ENCODE measurements at regions of chr7 and their contacts with region 1.

Region 1: DNA sequence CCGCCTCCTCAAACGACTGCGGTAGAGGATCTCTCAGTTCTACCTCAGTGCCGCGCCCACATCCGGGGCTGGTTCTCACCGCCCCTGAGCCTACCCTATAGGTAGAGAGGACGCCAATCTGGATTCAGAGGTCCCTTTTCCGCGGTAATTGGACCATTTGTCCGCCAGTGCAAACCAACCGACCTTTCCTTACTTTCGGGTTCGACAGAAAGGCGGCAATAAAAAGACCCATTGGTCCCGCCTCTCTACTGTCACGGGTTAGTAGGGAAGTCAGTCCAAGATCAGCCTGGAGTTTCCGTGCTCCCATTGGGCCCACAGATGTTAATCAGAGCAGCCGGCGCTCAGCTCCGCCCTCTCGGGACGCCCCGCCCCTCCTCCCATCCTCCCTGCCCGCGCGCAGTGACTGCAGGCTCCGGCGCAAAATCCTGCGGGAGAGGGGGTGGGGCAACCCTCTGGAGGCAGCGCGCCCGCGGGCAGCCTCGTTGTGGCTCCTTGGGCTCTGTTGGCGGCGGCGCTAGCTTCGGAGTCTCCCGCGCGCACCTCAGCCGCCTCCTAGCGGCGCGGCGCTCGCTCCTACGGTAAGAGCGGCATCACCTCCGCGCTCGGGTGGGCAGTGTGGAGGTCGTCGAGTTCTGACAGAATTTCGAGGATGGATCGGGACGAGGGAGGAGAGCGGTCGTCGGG is at the starts of genes PHTF2 and TMEM60:
- DNase-seq: peak; percentile 93 to 99 (median 96)
- H3K4me3 ChIP-seq: peak within 1 kb of the TSS; percentile 82 to 96
- H3K4me3 Mint-ChIP-seq: peak within 1 kb of the TSS; percentile 93 to 100 (median 96)
- H3K27ac ChIP-seq: peak within 1 kb of the TSS; percentile 80
- H3K27ac Mint-ChIP-seq: peak within 1 kb of the TSS; percentile 91 to 99 (median 95)
- H3K4me1 ChIP-seq: peaks cover 69% of the 10 kb centered on the region
- H3K4me1 Mint-ChIP-seq: peaks cover 53 to 83% (median 75%) of the 10 kb centered on the region in 4 donors
- H3K27me3 ChIP-seq: no peaks in the 10 kb centered on the region
- H3K27me3 Mint-ChIP-seq: no peaks in the 10 kb centered on the region
- total RNA-seq, gene PHTF2: 32.8 to 34.1 TPM
- total RNA-seq, gene TMEM60: 18.2 to 18.3 TPM

Region 2: GRCh38 chr7:77536413-77537135 is 262.0 kb before region 1 on chr7:
- CTCF ChIA-PET with region 1: no interaction called
- POLR2A ChIA-PET with region 1: no interaction called
- intact Hi-C with region 1: loop called (anchors 1 kb)
- DNase-seq: peak; percentile 93 to 96 (median 94)
- H3K4me3 ChIP-seq: peak overlapping the region; percentile 76 to 95
- H3K4me3 Mint-ChIP-seq: peak overlapping the region; percentile 93 to 98 (median 98)
- H3K27ac ChIP-seq: peak overlapping the region; percentile 77
- H3K27ac Mint-ChIP-seq: peak overlapping the region; percentile 94 to 98 (median 96)
- H3K4me1 ChIP-seq: peaks cover 7% of the 10 kb centered on the region
- H3K4me1 Mint-ChIP-seq: peaks cover 6 to 28% (median 16%) of the 10 kb centered on the region in 4 donors
- H3K27me3 ChIP-seq: no peaks in the 10 kb centered on the region
- H3K27me3 Mint-ChIP-seq: no peaks in the 10 kb centered on the region

Region 3: DNA sequence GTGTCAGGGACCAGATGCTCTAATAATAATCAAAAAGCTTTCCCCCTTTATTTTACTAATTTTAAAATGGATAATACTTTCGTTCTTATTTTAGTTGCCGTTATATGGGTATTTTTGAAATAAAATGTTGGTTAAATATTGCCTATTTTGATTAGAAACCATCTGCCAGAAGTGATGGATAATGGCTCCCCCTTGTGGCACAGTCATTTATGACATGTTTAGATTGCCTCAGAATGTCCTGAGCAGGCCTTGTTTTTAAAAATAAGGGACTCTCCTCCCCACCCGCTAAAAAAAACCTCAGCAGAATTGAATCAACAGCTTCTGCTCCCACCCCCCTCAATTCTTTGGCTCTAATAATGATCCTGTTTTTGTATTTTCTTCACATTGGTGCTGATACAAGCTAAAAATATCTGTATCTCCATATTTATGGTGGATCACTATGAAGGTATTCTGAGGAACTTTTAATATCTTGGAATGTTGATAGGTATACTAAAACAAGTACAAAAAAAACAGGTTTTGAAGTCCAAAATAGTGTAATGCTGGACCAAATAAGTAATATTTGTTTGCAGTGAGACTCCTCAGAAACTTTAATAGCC is 39.1 kb before region 1 on chr7:
- CTCF ChIA-PET with region 1: interaction called, 3 read pairs
- POLR2A ChIA-PET with region 1: interaction called, 3 read pairs
- intact Hi-C with region 1: loop called (anchors 2 kb)
- DNase-seq: peak; percentile 68 to 79 (median 73)
- H3K4me3 ChIP-seq: no peak overlapping the region
- H3K4me3 Mint-ChIP-seq: peak overlapping the region in 1 of 8 donors; percentile 28
- H3K27ac ChIP-seq: no peak overlapping the region
- H3K27ac Mint-ChIP-seq: peak overlapping the region in 6 of 7 donors; percentile 9 to 61 (median 36)
- H3K4me1 ChIP-seq: peaks cover 33% of the 10 kb centered on the region
- H3K4me1 Mint-ChIP-seq: peaks cover 29 to 51% (median 36%) of the 10 kb centered on the region in 4 donors
- H3K27me3 ChIP-seq: no peaks in the 10 kb centered on the region
- H3K27me3 Mint-ChIP-seq: no peaks in the 10 kb centered on the region

Region 4: GRCh38 chr7:77830649-77831355 is 32.3 kb after region 1 on chr7:
- CTCF ChIA-PET with region 1: interaction called, 14 read pairs
- POLR2A ChIA-PET with region 1: interaction called, 96 read pairs
- intact Hi-C with region 1: loop called (anchors 1 kb)
- DNase-seq: no peak
- H3K4me3 ChIP-seq: no peak overlapping the region
- H3K4me3 Mint-ChIP-seq: peak overlapping the region in 6 of 8 donors; percentile 32 to 84 (median 72)
- H3K27ac ChIP-seq: no peak overlapping the region
- H3K27ac Mint-ChIP-seq: peak overlapping the region; percentile 38 to 90 (median 79)
- H3K4me1 ChIP-seq: peaks cover 87% of the 10 kb centered on the region
- H3K4me1 Mint-ChIP-seq: peaks cover 51 to 83% (median 65%) of the 10 kb centered on the region in 4 donors
- H3K27me3 ChIP-seq: no peaks in the 10 kb centered on the region
- H3K27me3 Mint-ChIP-seq: no peaks in the 10 kb centered on the region

Region 5: GRCh38 chr7:77903597-77903996 is 105.1 kb after region 1 on chr7:
- CTCF ChIA-PET with region 1: interaction called, 3 read pairs
- POLR2A ChIA-PET with region 1: interaction called, 4 read pairs
- intact Hi-C with region 1: loop called (anchors 5 kb)
- DNase-seq: peak in 4 of 5 donors; percentile 8 to 39 (median 13)
- H3K4me3 ChIP-seq: no peak overlapping the region
- H3K4me3 Mint-ChIP-seq: no peak overlapping the region
- H3K27ac ChIP-seq: no peak overlapping the region
- H3K27ac Mint-ChIP-seq: peak overlapping the region in 2 of 7 donors; percentile 49 to 52
- H3K4me1 ChIP-seq: peaks cover 9% of the 10 kb centered on the region
- H3K4me1 Mint-ChIP-seq: peaks cover 10 to 30% (median 17%) of the 10 kb centered on the region in 4 donors
- H3K27me3 ChIP-seq: no peaks in the 10 kb centered on the region
- H3K27me3 Mint-ChIP-seq: no peaks in the 10 kb centered on the region

Region 6: GRCh38 chr7:77940647-77941046 is 142.1 kb after region 1 on chr7:
- CTCF ChIA-PET with region 1: interaction called, 3 read pairs
- POLR2A ChIA-PET with region 1: no interaction called
- intact Hi-C with region 1: loop called (anchors 10 kb)
- DNase-seq: no peak
- H3K4me3 ChIP-seq: no peak overlapping the region
- H3K4me3 Mint-ChIP-seq: no peak overlapping the region
- H3K27ac ChIP-seq: no peak overlapping the region
- H3K27ac Mint-ChIP-seq: no peak overlapping the region
- H3K4me1 ChIP-seq: peaks cover 2% of the 10 kb centered on the region
- H3K4me1 Mint-ChIP-seq: peaks cover 7 to 20% (median 11%) of the 10 kb centered on the region in 4 donors
- H3K27me3 ChIP-seq: no peaks in the 10 kb centered on the region
- H3K27me3 Mint-ChIP-seq: no peaks in the 10 kb centered on the region

Measured in CD4-positive, alpha-beta memory T cell (primary cell).